SK-N-SH (cell line): ENCODE measurements at regions of chr11 and their contacts with region 1.

Region 1: DNA sequence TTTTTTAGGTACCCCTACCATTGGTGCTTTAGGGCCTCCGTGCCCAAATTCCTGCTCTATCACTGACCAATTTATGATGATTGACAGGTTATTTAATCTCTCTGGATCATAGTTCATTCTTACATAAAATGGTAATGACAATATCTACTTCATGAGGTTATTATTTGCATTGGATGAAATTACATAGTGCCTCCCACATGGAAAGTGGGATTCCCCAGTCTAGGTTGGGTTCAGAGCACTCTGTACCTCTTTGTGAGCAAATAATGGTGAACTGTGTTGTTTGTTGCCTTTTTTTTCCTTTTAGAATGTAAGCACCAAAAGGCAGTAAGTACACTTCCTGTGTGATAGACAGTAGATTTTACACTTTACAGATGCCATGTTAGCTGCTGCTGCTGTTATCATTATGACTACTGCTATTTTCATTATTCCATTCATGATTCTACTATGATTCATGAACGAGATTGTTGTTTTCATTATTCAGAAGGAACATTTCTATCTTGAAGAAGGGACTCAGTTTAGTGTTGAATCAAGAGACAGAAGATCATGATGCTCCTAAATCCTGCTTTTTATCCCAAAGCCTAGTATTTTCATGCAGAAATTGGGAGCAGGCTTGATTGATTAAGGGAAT is 100.8 kb downstream of the ALX4 start:
- DNase-seq: no peak
- H3K4me3 ChIP-seq: no peak overlapping the region
- H3K27ac ChIP-seq: peak overlapping the region in 1 of 2 experiments; percentile 29; a peak in 1 of 4 replicates
- H3K4me1 ChIP-seq: no peaks in the 10 kb centered on the region; a peak in 1 of 4 replicates
- H3K27me3 ChIP-seq: no peaks in the 10 kb centered on the region
- CTCF ChIP-seq: no peak
- EP300 ChIP-seq: no peak
- RAD21 ChIP-seq: no peak

Region 2: GRCh38 chr11:44095506-44096394 is 113.3 kb before region 1 on chr11 and contains the start of gene EXT2:
- CTCF ChIA-PET with region 1: no interaction called
- POLR2A ChIA-PET with region 1: no interaction called
- DNase-seq: peak; percentile 97
- H3K4me3 ChIP-seq: peak within 1 kb of the TSS; percentile 71 to 91
- H3K27ac ChIP-seq: peak within 1 kb of the TSS; percentile 24 to 48; a peak in 2 of 4 replicates
- H3K4me1 ChIP-seq: peaks cover 3 to 9% of the 10 kb centered on the region in 2 experiments; a peak in 3 of 4 replicates
- H3K27me3 ChIP-seq: no peaks in the 10 kb centered on the region
- CTCF ChIP-seq: peak; percentile 80
- EP300 ChIP-seq: no peak
- RAD21 ChIP-seq: no peak
- polyA plus RNA-seq, gene EXT2: 92.9 and 96.7 TPM in 2 replicates

Region 3: DNA sequence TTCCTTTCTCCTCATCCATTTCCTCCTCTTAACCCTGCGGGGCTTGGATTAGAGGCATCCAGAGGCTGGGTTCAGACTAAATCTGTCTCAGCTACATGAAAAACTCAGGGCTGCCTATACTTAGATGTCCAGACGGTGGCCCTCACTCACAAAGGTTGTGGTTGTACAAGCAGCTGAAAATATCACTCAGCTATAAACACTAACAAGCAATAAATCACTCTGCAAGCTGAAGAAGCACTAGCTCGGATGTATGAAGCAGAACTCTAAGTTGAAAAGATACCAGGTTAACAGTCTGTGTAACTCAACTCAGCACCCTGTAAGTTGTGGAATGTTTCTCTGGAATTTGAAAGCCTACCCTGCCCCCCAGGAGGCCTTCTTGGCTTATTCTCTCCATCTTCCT is 30.7 kb before region 1 on chr11:
- CTCF ChIA-PET with region 1: no interaction called
- POLR2A ChIA-PET with region 1: no interaction called
- DNase-seq: no peak
- H3K4me3 ChIP-seq: no peak overlapping the region
- H3K27ac ChIP-seq: no peak overlapping the region
- H3K4me1 ChIP-seq: peaks cover 5 to 39% of the 10 kb centered on the region in 2 experiments; a peak in 3 of 4 replicates
- H3K27me3 ChIP-seq: no peaks in the 10 kb centered on the region
- CTCF ChIP-seq: no peak
- EP300 ChIP-seq: no peak
- RAD21 ChIP-seq: no peak

Region 4: DNA sequence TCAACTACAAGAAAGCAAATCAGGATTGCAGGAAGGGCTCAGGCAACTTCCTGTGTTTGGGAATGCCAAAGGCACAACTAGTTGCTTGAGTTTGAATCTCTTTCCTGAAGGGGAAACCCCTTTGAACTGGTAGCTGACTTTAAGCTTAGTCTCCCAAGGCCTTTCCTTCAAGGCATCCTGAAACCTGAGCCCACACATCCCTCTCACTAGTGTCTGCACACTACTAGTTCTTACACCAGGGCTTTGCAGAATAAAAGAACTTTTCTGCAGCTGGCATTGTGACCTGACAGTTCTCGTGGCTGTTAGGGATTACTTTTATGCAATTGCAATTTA is 18.3 kb before region 1 on chr11:
- CTCF ChIA-PET with region 1: interaction called, 11 read pairs
- POLR2A ChIA-PET with region 1: no interaction called
- DNase-seq: no peak
- H3K4me3 ChIP-seq: no peak overlapping the region
- H3K27ac ChIP-seq: peak overlapping the region in 1 of 2 experiments; percentile 47; a peak in 1 of 4 replicates
- H3K4me1 ChIP-seq: peaks cover 29 to 47% of the 10 kb centered on the region in 2 experiments; a peak in 3 of 4 replicates
- H3K27me3 ChIP-seq: no peaks in the 10 kb centered on the region
- CTCF ChIP-seq: no peak
- EP300 ChIP-seq: no peak
- RAD21 ChIP-seq: no peak